Ascending aorta (tissue), 2 donors: ENCODE measurements at regions of chr16 and their contacts with region 1.

Region 1: DNA sequence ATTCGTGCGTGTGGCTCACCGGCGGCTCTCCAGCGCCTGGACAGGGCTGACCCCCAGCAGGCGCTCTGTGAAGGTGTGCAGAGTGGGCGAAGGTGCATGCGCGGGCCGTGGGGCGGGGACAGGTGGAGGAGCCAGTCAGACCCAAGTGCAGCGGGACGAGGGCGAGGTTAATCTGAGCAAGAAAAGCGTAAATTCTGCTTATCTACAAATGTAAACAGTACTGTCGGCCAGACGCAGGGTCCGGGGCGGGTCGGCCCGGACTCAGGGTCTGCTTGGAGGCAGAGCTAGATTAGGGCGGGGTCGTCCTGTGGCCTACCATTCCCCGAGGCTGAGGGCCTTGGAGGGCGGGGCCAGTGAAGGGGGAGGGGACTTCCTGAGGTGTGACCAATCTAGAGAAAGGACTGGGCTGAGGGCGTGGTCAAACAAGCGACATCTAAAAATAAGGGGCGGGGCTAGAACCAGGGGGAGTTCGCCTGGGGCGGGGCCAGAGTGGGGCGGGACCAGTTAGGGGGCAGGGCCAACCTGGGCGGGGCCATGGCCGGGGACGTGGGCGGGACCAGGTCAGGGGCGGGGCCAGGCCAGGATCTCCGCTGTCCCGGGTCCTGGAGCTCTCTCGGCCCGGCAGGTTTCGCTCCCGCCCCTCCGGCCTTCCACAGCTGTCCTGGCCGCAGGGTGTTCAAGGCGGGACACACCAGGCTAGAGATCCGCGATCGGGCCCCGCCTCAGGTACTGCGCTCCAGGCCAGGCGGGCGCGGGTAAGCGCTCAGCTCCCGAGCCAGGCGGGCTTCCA is at the start of gene SEC14L5:
- DNase-seq: peak; percentile 86 to 98
- H3K4me3 ChIP-seq: peak within 1 kb of the TSS; percentile 53 to 67
- H3K27ac ChIP-seq: peak within 1 kb of the TSS in 1 of 2 donors; percentile 49
- H3K4me1 ChIP-seq: peaks cover 0 to 11% of the 10 kb centered on the region in 2 donors
- H3K27me3 ChIP-seq: no peaks in the 10 kb centered on the region
- CTCF ChIP-seq: no peak
- total RNA-seq, gene SEC14L5: 5.7 TPM

Region 2: GRCh38 chr16:4220358-4220757 is 737.6 kb before region 1 on chr16:
- intact Hi-C with region 1: no loop called
- DNase-seq: no peak
- H3K4me3 ChIP-seq: no peak overlapping the region
- H3K27ac ChIP-seq: no peak overlapping the region
- H3K4me1 ChIP-seq: peaks cover 0 to 6% of the 10 kb centered on the region in 2 donors
- H3K27me3 ChIP-seq: no peaks in the 10 kb centered on the region
- CTCF ChIP-seq: no peak

Region 3: GRCh38 chr16:4734063-4734729 is 223.7 kb before region 1 on chr16 and contains the starts of genes ANKS3 and DNAAF8:
- intact Hi-C with region 1: loop called (anchors 1 kb)
- DNase-seq: peak; percentile 91 to 99
- H3K4me3 ChIP-seq: peak within 1 kb of the TSS; percentile 78 to 92
- H3K27ac ChIP-seq: peak within 1 kb of the TSS; percentile 78 to 79
- H3K4me1 ChIP-seq: peaks cover 0 to 8% of the 10 kb centered on the region in 2 donors
- H3K27me3 ChIP-seq: no peaks in the 10 kb centered on the region
- CTCF ChIP-seq: no peak
- total RNA-seq, gene ANKS3: 55.9 TPM
- total RNA-seq, gene DNAAF8: not detected

Region 4: DNA sequence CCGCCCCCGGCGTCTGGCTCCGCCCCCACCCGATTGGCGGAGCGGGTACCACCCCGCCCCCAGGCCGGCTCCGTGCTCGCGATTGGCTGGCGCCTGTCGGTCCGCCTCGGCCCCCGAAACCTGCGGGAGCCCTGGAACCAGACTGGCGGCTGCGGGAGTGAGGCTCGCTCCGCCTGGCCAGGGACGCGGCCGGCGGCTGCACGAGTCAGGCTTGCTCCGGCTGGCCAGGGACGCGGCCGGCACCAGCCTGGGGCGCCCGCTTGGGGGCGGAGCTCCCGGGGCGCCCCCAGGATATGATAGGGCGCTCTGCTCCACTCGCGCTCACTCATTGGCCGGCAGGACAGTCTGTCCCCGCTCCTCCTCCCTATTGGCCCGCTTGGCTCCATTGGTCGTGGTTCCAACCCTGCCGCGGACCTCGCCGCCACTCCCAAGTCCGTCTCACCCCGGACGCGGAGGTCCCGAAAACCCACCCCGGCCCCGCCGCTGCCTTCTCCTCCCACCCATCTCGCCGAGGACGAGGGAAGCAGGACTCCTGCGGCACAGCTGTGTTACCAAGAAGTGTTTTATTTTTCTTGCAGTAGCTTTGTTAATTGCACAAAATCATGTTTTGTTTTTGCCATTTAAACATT is 155.1 kb before region 1 on chr16:
- intact Hi-C with region 1: loop called (anchors 2 kb)
- DNase-seq: peak; percentile 73 to 95
- H3K4me3 ChIP-seq: peak overlapping the region; percentile 74 to 78
- H3K27ac ChIP-seq: peak overlapping the region; percentile 67 to 69
- H3K4me1 ChIP-seq: peaks cover 4 to 9% of the 10 kb centered on the region in 2 donors
- H3K27me3 ChIP-seq: no peaks in the 10 kb centered on the region
- CTCF ChIP-seq: peak in 1 of 3 experiments; percentile 1

Region 5: DNA sequence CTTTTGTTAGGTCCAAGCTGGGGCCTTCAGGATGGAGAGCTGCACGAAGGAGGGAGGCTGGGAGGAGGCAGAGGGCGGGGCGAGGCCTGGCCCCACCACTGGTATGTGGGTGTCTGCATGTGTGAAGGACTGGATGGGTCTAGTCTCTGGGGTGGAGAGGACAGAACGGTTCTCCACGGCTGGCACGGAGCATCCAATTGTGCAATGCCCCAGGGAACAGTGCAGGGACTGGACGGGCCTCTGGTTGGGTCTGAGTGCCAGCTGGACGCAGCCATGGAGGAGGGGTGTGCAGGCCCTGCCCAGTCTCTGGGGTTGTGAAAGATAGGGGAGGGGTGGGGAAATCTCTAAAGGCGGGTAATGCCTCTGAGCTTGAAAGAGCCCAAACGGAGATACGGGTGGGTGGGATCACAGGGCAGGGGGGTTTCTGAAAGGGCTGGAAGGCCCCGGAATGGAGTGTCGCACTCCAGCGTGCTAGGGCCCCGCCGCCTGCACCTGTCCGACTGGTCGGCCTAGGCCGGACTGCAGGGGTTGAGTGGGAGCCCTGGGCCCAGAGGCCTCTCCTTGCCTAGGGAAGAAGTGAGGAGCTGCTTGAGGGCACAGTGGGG is 22.6 kb before region 1 on chr16:
- intact Hi-C with region 1: loop called (anchors 2 kb)
- DNase-seq: peak; percentile 33 to 94
- H3K4me3 ChIP-seq: peak overlapping the region; percentile 59 to 78
- H3K27ac ChIP-seq: peak overlapping the region in 1 of 2 donors; percentile 58
- H3K4me1 ChIP-seq: peaks cover 19 to 20% of the 10 kb centered on the region in 2 donors
- H3K27me3 ChIP-seq: no peaks in the 10 kb centered on the region
- CTCF ChIP-seq: no peak

Region 6: GRCh38 chr16:5071681-5072333 is 113.9 kb after region 1 on chr16 and contains the start of gene ALG1:
- intact Hi-C with region 1: loop called (anchors 5 kb)
- DNase-seq: peak; percentile 42 to 93
- H3K4me3 ChIP-seq: peak within 1 kb of the TSS; percentile 63 to 68
- H3K27ac ChIP-seq: peak within 1 kb of the TSS; percentile 66 to 77
- H3K4me1 ChIP-seq: peaks cover 0 to 10% of the 10 kb centered on the region in 2 donors
- H3K27me3 ChIP-seq: no peaks in the 10 kb centered on the region
- CTCF ChIP-seq: no peak
- total RNA-seq, gene ALG1: 27.2 TPM